Activated CD8-positive, alpha-beta memory T cell treated with anti-CD3 and anti-CD28 coated beads, Interleukin-2, amount 10 ng/mL, durations not matched to agents 7 days and 5 days (primary cell): ENCODE measurements at regions of chr6 and their contacts with region 1.

Region 1: GRCh38 chr6:89940225-89941027 is 46.2 kb downstream of the GJA10 start:
- DNase-seq: peak; percentile 83
- ATAC-seq: peak; percentile 94
- H3K4me3 Mint-ChIP-seq: no peak overlapping the region
- H3K27ac Mint-ChIP-seq: no peak overlapping the region
- H3K4me1 Mint-ChIP-seq: peaks cover 33% of the 10 kb centered on the region
- H3K27me3 Mint-ChIP-seq: no peaks in the 10 kb centered on the region

Region 2: GRCh38 chr6:89817481-89817880 is 122.9 kb before region 1 on chr6:
- CTCF ChIA-PET with region 1: no interaction called
- DNase-seq: no peak
- ATAC-seq: no peak
- H3K4me3 Mint-ChIP-seq: peak overlapping the region; percentile 14
- H3K27ac Mint-ChIP-seq: peak overlapping the region; percentile 40
- H3K4me1 Mint-ChIP-seq: peaks cover 26% of the 10 kb centered on the region
- H3K27me3 Mint-ChIP-seq: no peaks in the 10 kb centered on the region

Region 3: DNA sequence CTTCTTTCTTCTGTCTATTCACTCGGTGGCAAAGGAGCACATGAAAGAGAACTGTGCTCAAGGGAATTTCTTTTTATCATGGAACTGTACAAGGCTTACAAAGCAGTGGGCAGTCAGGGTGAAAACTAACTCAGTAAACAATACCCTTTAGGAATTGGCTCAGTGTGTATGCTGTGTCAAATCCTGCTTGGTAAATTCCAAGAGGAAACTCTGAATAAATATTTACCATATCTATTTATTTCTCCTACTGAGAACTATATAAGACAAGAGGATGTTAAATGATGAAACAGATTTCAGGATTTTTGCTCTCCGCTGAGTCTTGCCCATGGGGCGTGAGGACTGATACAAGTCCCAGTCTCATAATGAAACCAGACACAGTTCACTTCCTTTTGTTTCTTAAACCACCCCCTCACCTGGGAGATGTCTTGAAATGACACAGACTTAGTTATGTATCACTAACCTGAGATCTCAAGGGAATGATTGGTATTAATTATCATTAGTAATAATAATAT is 167.4 kb after region 1 on chr6:
- CTCF ChIA-PET with region 1: interaction called, 26 read pairs
- DNase-seq: peak; percentile 63
- ATAC-seq: peak; percentile 56
- H3K4me3 Mint-ChIP-seq: no peak overlapping the region
- H3K27ac Mint-ChIP-seq: no peak overlapping the region
- H3K4me1 Mint-ChIP-seq: peaks cover 87% of the 10 kb centered on the region
- H3K27me3 Mint-ChIP-seq: peaks cover 10% of the 10 kb centered on the region

Region 4: DNA sequence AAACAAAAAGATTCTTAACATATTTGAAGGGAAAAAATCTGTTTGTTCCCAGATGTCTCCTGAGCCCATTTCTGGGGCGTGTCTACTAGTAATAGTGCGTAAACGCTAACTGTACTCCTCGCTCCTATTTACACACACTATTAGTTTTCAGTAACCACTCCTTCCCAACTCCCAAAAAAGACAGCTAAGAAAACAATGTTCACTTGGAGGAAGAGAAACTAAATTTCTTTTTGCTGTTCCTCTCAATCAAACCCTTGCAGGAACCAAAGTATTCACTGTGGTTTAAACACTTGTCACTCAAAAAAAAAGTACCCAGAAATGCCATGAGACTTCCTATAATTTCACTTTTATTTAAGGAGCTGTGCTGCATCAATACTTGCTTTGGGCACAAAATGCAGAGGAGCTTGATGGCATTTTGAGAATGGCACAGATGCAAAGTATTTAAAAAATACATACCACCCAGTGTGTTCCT is 238.0 kb after region 1 on chr6:
- CTCF ChIA-PET with region 1: interaction called, 12 read pairs
- DNase-seq: no peak
- ATAC-seq: no peak
- H3K4me3 Mint-ChIP-seq: peak overlapping the region; percentile 9
- H3K27ac Mint-ChIP-seq: peak overlapping the region; percentile 25
- H3K4me1 Mint-ChIP-seq: peaks cover 42% of the 10 kb centered on the region
- H3K27me3 Mint-ChIP-seq: no peaks in the 10 kb centered on the region

Region 5: GRCh38 chr6:90425161-90425641 is 484.8 kb after region 1 on chr6:
- CTCF ChIA-PET with region 1: interaction called, 10 read pairs
- DNase-seq: peak; percentile 75
- ATAC-seq: peak; percentile 95
- H3K4me3 Mint-ChIP-seq: peak overlapping the region; percentile 73
- H3K27ac Mint-ChIP-seq: peak overlapping the region; percentile 99
- H3K4me1 Mint-ChIP-seq: peaks cover 27% of the 10 kb centered on the region
- H3K27me3 Mint-ChIP-seq: no peaks in the 10 kb centered on the region